Dorsolateral prefrontal cortex (tissue), 120 donors: ENCODE measurements at regions of chr19 and their contacts with region 1.

Region 1: DNA sequence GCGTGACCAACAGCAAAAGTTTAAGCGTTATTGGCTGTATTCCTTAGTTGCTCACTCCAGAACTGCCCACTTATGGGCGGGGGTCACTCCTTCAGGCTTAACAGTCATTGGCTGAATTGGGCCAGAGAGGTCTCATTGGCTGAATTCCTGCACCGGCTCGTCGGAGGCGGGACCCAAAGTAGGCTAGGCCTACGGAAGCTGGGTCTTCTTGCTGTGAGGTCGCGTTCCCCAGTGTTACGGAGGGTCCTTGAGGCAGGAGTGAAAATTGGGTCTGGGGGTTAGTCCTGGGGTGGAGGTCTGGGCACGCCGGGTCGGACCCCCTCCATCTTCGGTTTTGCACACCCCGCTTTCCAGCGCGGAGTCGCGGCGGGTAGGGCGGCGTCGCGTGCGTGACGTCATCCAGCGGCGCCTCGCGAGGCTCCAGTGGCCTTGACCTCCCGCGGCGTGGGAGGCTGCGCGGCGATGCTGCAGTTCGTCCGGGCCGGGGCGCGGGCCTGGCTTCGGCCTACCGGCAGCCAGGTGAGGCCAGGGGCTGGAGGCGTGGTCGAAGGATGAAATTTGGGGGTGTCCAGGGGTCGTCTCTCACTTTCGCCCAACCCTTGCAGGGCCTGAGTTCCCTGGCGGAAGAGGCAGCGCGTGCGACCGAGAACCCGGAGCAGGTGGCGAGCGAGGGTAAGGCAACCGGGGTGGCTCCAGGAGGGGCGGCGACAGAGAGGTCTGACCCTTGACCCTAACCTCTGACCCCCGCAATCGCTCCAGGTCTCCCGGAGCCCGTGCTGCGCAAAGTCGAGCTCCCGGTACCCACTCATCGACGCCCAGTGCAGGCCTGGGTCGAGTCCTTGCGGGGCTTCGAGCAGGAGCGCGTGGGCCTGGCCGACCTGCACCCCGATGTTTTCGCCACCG is at the start of gene MRPL4:
- DNase-seq: peak; percentile 84 to 98 (median 96)
- H3K4me3 ChIP-seq: peak within 1 kb of the TSS; percentile 73 to 99 (median 93)
- H3K27ac ChIP-seq: peak within 1 kb of the TSS in 57 of 59 donors; percentile 1 to 95 (median 84)
- H3K27me3 ChIP-seq: no peaks in the 10 kb centered on the region
- CTCF ChIP-seq: peak in 18 of 56 donors; percentile 7 to 58 (median 27)
- total RNA-seq, gene MRPL4: 35.7 to 68.1 (median 53.5) TPM

Region 2: DNA sequence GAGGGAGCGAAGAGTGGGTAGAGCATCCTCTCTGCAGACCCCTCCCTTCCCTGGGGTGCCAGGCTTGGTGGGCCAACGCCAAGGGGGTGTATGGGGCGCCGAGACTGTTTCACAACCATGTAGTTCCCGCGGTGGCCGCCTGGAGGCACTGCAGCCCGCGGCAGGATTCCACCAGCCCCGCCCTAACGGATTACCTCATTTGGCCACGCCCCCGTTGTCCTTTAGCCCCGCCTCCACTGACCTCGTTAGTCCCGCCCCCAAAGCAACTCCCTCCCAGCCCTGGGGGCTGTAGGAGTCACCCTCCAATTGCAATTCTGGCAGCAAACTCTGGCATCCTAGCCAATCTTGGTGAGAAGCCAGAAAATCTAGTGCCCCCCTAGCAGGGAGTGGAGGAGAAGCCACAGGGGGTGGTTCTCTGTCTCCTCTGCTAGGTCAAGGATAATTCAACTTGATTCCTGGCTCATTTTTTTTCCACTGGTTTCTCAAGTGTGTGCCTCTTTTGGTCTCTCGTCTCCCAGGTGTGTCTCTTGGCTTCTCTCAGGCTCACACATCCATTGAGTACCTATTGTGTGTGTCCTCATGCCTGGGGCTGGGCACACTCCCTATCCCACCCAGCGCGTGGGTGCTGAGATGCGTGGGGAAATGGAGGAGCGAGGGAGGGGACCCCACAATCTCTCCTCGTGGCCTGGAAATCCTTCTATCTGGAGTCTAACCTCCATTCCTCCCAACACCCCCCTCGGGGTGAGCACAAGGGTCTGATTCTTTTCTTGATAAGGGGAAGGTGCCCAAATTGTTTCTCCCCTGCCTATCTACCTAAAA is 317.7 kb before region 1 on chr19:
- intact Hi-C with region 1: loop called (anchors 2 to 5 kb)
- DNase-seq: peak; percentile 29 to 81 (median 71)
- H3K4me3 ChIP-seq: peak overlapping the region in 50 of 59 donors; percentile 4 to 70 (median 55)
- H3K27ac ChIP-seq: peak overlapping the region in 37 of 59 donors; percentile 5 to 79 (median 54)
- H3K27me3 ChIP-seq: peaks cover 0 to 60% (median 23%) of the 10 kb centered on the region in 45 donors
- CTCF ChIP-seq: peak; percentile 42 to 89 (median 79)

Region 3: DNA sequence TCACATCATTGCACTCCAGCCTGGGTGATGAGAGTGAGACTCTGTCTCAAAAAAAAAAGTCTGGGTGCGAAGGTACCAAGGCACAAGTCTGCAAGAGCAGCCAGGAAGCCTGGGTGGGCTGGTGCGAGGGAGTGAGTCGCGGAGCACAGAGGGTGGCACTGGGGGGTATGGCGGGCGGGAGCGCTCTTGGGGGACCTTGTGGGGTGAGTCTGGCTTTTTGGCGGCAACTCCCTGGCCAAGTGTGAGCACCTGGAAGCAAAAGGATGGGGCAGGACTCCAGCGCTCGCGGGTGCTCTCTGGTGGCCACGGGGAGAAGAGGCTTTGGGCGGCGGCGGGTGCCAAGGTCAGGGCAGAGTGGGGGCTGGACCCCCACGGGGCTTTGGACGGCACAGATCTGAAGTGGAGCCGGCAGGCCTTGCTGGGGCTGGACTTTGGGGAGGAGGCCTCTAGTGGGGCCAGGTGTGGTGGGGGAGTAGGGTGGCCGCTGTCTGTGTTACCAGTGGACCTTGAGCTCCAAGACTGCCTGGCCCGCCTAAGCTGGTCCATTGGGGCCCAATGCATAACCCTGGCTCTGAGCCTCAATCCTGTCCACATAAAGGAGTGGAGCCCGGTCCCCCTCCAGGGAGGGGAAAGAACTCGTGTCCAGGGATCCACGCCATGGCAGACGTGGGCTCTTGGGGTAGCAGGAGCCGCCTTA is 139.0 kb before region 1 on chr19:
- intact Hi-C with region 1: loop called (anchors 5 kb)
- DNase-seq: peak in 3 of 10 donors; percentile 20 to 54 (median 33)
- H3K4me3 ChIP-seq: peak overlapping the region in 4 of 59 donors; percentile 14 to 39 (median 17)
- H3K27ac ChIP-seq: peak overlapping the region in 17 of 59 donors; percentile 4 to 42 (median 16)
- H3K27me3 ChIP-seq: no peaks in the 10 kb centered on the region
- CTCF ChIP-seq: peak in 53 of 56 donors; percentile 18 to 66 (median 49)

Region 4: DNA sequence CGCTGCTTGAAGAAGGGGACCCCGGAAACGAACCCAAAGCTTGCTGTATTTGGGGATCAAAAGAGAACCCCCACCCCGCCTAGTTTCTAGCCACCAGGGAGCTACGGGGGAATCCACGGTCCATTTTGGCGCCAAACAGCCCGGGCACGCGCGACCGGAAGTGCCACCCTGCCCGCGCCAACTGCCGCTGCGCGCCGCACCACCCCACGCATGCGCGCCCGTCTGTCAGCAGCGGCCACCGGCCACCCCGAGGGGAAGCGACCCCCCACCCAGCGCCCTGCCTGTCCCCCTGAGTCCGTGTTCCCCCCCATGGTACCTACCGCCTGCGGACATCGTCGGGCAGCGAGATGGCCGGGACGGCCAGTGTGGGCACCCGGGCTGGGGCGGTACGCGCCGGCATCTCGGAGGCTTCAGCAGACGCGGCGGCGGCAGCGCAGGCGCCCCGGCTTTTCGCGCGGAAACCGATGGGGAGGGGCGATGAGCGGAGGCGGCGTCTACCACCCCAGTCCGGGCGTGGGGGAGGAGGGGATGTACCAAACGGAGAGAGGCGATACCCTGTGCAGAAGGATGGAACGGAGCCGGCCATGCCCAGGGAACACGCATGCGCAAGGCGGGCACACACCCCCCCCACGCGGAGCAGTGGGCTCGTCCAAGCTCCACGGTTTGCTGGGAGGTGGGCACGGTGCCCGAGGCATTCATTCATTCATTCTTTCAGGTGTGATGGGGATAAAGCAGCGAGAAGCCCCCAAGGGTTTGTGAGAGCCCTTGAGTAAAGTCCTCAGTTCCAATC is 57.3 kb before region 1 on chr19 and contains the start of gene DNMT1:
- intact Hi-C with region 1: loop called (anchors 1 to 2 kb)
- DNase-seq: peak; percentile 93 to 98 (median 96)
- H3K4me3 ChIP-seq: peak within 1 kb of the TSS; percentile 64 to 96 (median 88)
- H3K27ac ChIP-seq: peak within 1 kb of the TSS; percentile 66 to 98 (median 92)
- H3K27me3 ChIP-seq: no peaks in the 10 kb centered on the region
- CTCF ChIP-seq: peak in 29 of 56 donors; percentile 3 to 50 (median 16)
- total RNA-seq, gene DNMT1: 44.4 to 105 (median 67.2) TPM

Region 5: DNA sequence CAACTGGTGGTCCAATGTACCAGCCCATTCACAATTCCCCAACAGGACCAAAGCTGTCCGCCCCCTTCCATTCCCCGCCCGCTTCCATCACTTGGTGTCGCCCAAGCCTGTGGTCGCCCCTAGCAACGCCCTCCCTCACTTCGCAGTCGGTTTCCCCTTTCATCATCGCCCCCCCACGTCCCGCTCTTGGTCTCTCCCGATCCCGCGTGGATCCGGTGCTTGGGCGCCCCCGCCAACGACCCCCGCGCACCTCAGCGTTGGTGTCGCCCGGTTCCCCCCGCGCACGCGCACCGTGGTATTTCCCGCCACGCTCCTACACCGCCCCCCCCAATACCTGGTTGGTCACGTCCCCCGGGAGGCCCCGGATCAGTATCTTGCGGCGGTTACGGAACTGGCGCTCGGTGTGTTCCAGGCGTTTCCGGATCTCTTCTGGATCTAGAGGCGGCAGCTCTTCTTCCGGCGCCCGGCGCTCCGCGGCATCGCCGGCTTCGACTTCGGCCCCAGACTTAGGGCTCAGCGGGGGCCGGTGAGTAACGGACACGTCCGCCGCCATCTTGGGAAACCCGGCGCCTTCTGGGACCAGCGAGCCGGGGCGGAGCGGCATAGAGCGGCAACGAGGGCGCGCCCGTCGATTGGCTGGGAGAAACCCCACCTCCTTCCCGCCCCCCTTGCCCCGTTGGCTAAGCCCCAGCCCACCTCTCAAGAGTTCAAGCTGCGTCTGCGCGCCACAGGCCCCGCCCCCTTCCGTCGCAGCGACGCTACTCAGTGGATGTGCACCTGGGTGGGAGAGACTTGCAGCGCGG is 81.1 kb after region 1 on chr19 and contains the start of gene RAVER1:
- intact Hi-C with region 1: loop called in 1 of 2 experiments (anchors 5 kb)
- DNase-seq: peak; percentile 95 to 99 (median 98)
- H3K4me3 ChIP-seq: peak within 1 kb of the TSS; percentile 64 to 93 (median 83)
- H3K27ac ChIP-seq: peak within 1 kb of the TSS; percentile 76 to 99 (median 95)
- H3K27me3 ChIP-seq: no peaks in the 10 kb centered on the region
- CTCF ChIP-seq: peak in 14 of 56 donors; percentile 1 to 55 (median 16)
- total RNA-seq, gene RAVER1: 14.3 to 30.3 (median 19.9) TPM